ENCODE measurements at regions of chr6 and their contacts with region 1.

Region 1: DNA sequence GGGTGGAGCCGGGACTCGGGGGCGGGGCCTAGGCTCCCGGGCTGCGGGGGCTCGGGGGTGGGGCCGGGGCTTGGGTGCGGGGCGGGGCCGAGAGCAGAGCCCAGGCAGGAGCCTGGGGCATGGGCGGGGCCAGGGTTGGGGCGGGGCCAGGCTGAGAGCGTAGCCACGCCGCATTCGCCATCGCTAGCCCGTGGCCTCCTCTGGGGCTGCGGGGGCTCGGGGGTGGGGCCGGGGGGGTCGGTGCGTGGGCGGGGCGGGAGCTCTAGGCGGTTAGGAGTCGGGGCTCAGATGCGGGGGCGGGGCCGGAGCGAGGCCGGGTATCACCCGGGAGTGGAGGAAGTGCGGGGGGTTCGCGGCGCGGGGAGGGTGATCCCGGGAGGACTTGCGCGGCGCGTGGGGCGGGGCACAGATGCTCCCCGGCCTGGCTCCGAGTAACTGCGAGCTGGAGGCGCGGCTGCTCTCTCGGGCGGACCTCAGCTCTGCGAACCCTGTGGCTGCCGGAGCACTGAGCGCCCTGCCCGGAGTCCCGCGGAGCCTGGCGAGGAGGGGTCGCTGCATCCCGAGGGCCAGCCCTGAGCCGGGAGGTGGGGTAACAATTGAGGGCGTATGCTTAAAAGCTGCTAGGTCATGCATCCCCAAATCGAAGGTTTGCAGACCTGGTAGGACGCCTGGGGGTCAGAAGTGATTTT is 434 bp upstream of the ECI2 start:
- DNase-seq: peak; percentile 91
- H3K4me3 Mint-ChIP-seq: peak overlapping the region; percentile 77
- H3K27ac Mint-ChIP-seq: peak overlapping the region; percentile 81
- H3K4me1 Mint-ChIP-seq: peaks cover 40% of the 10 kb centered on the region
- H3K27me3 Mint-ChIP-seq: peaks cover 2% of the 10 kb centered on the region

Region 2: GRCh38 chr6:2853761-2854395 is 1281.9 kb before region 1 on chr6:
- intact Hi-C with region 1: loop called (anchors 5 kb)
- DNase-seq: no peak
- H3K4me3 Mint-ChIP-seq: peak overlapping the region; percentile 43
- H3K27ac Mint-ChIP-seq: peak overlapping the region; percentile 99
- H3K4me1 Mint-ChIP-seq: peaks cover 68% of the 10 kb centered on the region
- H3K27me3 Mint-ChIP-seq: no peaks in the 10 kb centered on the region

Region 3: GRCh38 chr6:4018172-4018905 is 117.5 kb before region 1 on chr6:
- intact Hi-C with region 1: loop called (anchors 1 kb)
- DNase-seq: peak; percentile 95
- H3K4me3 Mint-ChIP-seq: peak overlapping the region; percentile 98
- H3K27ac Mint-ChIP-seq: peak overlapping the region; percentile 99
- H3K4me1 Mint-ChIP-seq: peaks cover 46% of the 10 kb centered on the region
- H3K27me3 Mint-ChIP-seq: no peaks in the 10 kb centered on the region

Region 4: GRCh38 chr6:4155848-4156466 is 20.1 kb after region 1 on chr6:
- intact Hi-C with region 1: loop called (anchors 1 kb)
- DNase-seq: peak; percentile 72
- H3K4me3 Mint-ChIP-seq: no peak overlapping the region
- H3K27ac Mint-ChIP-seq: peak overlapping the region; percentile 35
- H3K4me1 Mint-ChIP-seq: peaks cover 8% of the 10 kb centered on the region
- H3K27me3 Mint-ChIP-seq: peaks cover 5% of the 10 kb centered on the region

Region 5: DNA sequence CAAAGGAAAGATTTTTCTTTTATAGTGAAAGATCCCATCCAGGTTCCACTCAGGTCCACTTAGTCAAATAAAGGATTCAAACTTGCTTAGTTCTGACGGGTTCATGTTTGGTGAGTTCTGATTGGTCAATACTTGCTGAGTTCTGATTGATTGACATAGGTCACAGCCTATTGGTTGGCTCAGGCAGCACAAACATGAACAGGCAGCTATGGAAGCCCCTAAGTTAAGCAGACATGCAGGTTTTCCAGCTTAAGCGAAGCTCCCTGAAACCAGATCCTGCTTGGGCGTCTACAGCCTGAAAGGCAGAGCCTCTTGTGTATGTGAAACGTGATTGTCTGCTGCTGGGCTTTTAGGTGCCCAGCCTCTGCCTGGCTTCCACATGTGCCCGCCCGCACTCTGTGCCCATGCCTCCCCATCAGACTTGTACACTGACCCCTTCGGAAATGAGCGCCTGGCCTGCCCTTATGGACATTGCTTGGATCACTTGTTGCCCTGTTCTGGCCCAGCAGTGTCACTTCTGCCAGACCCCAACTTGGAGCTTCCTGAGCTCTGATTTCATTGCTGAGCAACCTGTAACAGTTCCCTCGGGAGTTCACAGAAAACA is 44.9 kb after region 1 on chr6:
- intact Hi-C with region 1: loop called (anchors 1 kb)
- DNase-seq: no peak
- H3K4me3 Mint-ChIP-seq: no peak overlapping the region
- H3K27ac Mint-ChIP-seq: no peak overlapping the region
- H3K4me1 Mint-ChIP-seq: peaks cover 11% of the 10 kb centered on the region
- H3K27me3 Mint-ChIP-seq: peaks cover 4% of the 10 kb centered on the region

Region 6: DNA sequence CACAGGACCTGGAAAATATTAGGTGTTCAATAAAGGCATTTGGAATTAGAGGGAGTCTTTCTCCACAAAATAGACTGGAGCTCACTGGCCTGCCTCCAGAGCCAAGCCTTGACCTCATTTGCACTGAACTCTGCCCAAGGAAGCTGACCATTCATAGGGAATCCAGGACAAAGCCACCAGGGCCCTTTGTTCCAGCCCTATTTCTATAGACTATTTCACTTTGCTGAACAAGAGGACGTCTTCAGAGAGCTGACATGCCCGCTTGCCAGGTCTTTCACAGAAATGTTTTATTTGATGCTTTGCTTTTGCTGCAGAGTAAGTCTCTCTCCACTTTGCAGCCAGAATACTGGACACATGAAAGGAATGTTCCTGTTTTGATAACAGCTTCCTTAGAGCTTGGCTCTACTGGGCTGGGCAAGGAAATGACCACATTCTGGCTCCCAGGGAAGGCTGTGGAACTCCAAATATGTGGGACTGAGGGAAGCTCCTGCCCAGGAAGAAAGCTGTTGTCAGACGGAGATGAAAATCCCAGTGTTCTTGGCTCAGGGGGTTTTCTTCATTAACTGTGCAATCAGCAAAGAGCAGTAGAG is 446.1 kb after region 1 on chr6:
- intact Hi-C with region 1: no loop called
- DNase-seq: no peak
- H3K4me3 Mint-ChIP-seq: no peak overlapping the region
- H3K27ac Mint-ChIP-seq: no peak overlapping the region
- H3K4me1 Mint-ChIP-seq: no peaks in the 10 kb centered on the region
- H3K27me3 Mint-ChIP-seq: no peaks in the 10 kb centered on the region

Measured in activated T-helper 2 cell treated with anti-CD3 and anti-CD28 coated beads, Interferon-gamma antibody, Interleukin-2, Interleukin-4, amounts not matched to agents 10 μg/mL and 5 μg/mL and 100 μg/mL, durations not matched to agents 14 hours and 24 hours and 36 hours (primary cell).